HCT116 (cell line): ENCODE measurements at regions of chr3 and their contacts with region 1.

Region 1: GRCh38 chr3:148718982-148719862 is 21.5 kb downstream of the AGTR1 start:
- DNase-seq: peak; percentile 4
- ATAC-seq: peak; percentile 49; the same call in 1 of the 2 replicates
- H3K4me3 ChIP-seq: no peak overlapping the region
- H3K27ac ChIP-seq: no peak overlapping the region
- H3K4me1 ChIP-seq: 0 out of 4 replicates have a peak, but pooled peaks cover 0 to 4% of the 10 kb centered on the region in 2 experiments
- H3K27me3 ChIP-seq: no peaks in the 10 kb centered on the region
- CTCF ChIP-seq: peak; percentile 38 to 61 (median 44); a peak in 5 of 6 replicates
- POLR2A ChIP-seq: no peak
- RAD21 ChIP-seq: peak; percentile 67

Region 2: DNA sequence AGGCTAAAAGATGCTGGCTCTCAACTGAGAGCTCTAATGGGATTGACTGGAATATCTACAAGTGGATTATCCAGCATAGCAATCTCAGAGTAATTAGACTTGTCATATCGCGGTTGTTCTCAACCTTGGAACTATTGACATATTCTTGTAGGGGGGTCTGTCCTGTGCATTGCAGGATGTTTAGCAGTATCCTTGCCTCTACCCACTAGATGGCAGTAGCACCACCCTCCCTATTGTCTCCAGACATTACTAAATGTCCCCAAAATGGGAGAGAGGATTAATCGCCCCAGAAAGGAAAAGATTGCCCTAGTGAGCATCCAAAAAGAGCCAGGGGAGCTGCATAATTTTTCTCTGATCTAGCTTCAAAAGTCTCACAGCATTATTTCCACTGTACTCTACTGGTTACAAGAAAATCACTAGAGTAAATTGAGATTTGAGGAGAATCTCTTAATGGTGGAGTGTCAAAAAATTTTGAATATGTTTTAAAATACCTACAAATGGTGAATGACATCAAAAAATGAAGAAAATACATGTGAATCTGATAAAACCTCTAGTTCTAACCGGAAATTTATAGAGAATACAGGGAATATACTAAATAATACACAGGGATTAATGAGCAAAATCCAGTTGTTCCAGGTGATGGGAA is 409.7 kb before region 1 on chr3:
- CTCF ChIA-PET with region 1: no interaction called
- POLR2A ChIA-PET with region 1: no interaction called
- RAD21 ChIA-PET with region 1: no interaction called
- intact Hi-C with region 1: loop called (anchors 1 kb)
- DNase-seq: peak; percentile 45
- ATAC-seq: peak; percentile 90
- H3K4me3 ChIP-seq: no peak overlapping the region
- H3K27ac ChIP-seq: no peak overlapping the region
- H3K4me1 ChIP-seq: no peaks in the 10 kb centered on the region
- H3K27me3 ChIP-seq: no peaks in the 10 kb centered on the region
- CTCF ChIP-seq: peak; percentile 22 to 78 (median 77); a peak in 5 of 6 replicates
- POLR2A ChIP-seq: no peak
- RAD21 ChIP-seq: peak; percentile 51

Region 3: GRCh38 chr3:148763986-148764935 is 45.0 kb after region 1 on chr3:
- CTCF ChIA-PET with region 1: no interaction called
- POLR2A ChIA-PET with region 1: no interaction called
- RAD21 ChIA-PET with region 1: no interaction called
- intact Hi-C with region 1: no loop called
- DNase-seq: no peak
- ATAC-seq: no peak
- H3K4me3 ChIP-seq: no peak overlapping the region
- H3K27ac ChIP-seq: no peak overlapping the region
- H3K4me1 ChIP-seq: no peaks in the 10 kb centered on the region
- H3K27me3 ChIP-seq: no peaks in the 10 kb centered on the region
- CTCF ChIP-seq: peak in 1 of 3 experiments; percentile 22; a peak in 1 of 6 replicates
- POLR2A ChIP-seq: no peak
- RAD21 ChIP-seq: no peak